OCI-LY7 (cell line): ENCODE measurements at regions of chr13 and their contacts with region 1.

Region 1: DNA sequence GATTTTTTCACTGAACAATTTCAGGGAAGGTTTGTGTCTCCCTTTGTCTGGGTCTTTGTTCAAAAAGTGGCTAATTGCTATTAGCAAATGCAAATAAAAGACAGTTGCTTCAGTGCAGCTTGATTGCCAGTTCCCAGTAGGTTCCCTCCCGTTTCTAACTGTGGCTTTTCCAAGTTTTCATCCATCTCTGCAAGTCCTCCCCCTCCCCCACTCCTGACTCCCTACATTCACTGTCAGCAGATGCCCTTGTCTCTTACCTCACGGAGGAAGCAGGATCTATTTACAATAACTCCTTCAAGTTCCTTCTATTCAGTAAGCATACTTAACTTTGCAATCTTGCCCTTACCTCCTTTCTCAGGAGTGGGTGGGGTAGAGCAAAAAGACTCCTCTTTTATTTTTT is 55.4 kb upstream of the SCEL start:
- DNase-seq: no peak
- H3K4me3 ChIP-seq: no peak overlapping the region
- H3K27ac ChIP-seq: no peak overlapping the region
- H3K4me1 ChIP-seq: peaks cover 8% of the 10 kb centered on the region
- CTCF ChIP-seq: no peak

Region 2: GRCh38 chr13:77184455-77184854 is 295.6 kb before region 1 on chr13:
- CTCF ChIA-PET with region 1: no interaction called
- POLR2A ChIA-PET with region 1: interaction called, 5 read pairs
- intact Hi-C with region 1: loop called (anchors 10 kb)
- DNase-seq: peak; percentile 67
- H3K4me3 ChIP-seq: no peak overlapping the region
- H3K27ac ChIP-seq: peak overlapping the region; percentile 52
- H3K4me1 ChIP-seq: peaks cover 15% of the 10 kb centered on the region
- CTCF ChIP-seq: no peak

Region 3: GRCh38 chr13:77329133-77329910 is 150.7 kb before region 1 on chr13:
- CTCF ChIA-PET with region 1: interaction called, 5 read pairs
- POLR2A ChIA-PET with region 1: interaction called, 23 read pairs
- intact Hi-C with region 1: loop called (anchors 1 kb)
- DNase-seq: peak; percentile 99
- H3K4me3 ChIP-seq: peak overlapping the region; percentile 89
- H3K27ac ChIP-seq: peak overlapping the region; percentile 97
- H3K4me1 ChIP-seq: peaks cover 45% of the 10 kb centered on the region
- CTCF ChIP-seq: no peak; the same call in 1 of the 2 replicates

Region 4: GRCh38 chr13:77415253-77416071 is 64.6 kb before region 1 on chr13:
- CTCF ChIA-PET with region 1: interaction called, 3 read pairs
- POLR2A ChIA-PET with region 1: interaction called, 20 read pairs
- intact Hi-C with region 1: loop called (anchors 2 kb)
- DNase-seq: peak; percentile 58
- H3K4me3 ChIP-seq: no peak overlapping the region
- H3K27ac ChIP-seq: peak overlapping the region; percentile 29
- H3K4me1 ChIP-seq: peaks cover 31% of the 10 kb centered on the region
- CTCF ChIP-seq: no peak

Region 5: GRCh38 chr13:77460195-77460594 is 19.9 kb before region 1 on chr13:
- CTCF ChIA-PET with region 1: interaction called, 3 read pairs
- POLR2A ChIA-PET with region 1: interaction called, 16 read pairs
- intact Hi-C with region 1: no loop called
- DNase-seq: peak; percentile 18
- H3K4me3 ChIP-seq: no peak overlapping the region
- H3K27ac ChIP-seq: no peak overlapping the region
- H3K4me1 ChIP-seq: no peaks in the 10 kb centered on the region
- CTCF ChIP-seq: no peak